MCF 10A (cell line): ENCODE measurements at regions of chr12 and their contacts with region 1.

Region 1: GRCh38 chr12:54993161-54993835 is 8.7 kb upstream of the TESPA1 start:
- DNase-seq: peak; percentile 74
- H3K4me3 Mint-ChIP-seq: no peak overlapping the region
- H3K27ac Mint-ChIP-seq: no peak overlapping the region
- H3K4me1 Mint-ChIP-seq: peaks cover 5% of the 10 kb centered on the region
- H3K27me3 Mint-ChIP-seq: peaks cover 76% of the 10 kb centered on the region
- CTCF ChIP-seq: peak; percentile 78

Region 2: DNA sequence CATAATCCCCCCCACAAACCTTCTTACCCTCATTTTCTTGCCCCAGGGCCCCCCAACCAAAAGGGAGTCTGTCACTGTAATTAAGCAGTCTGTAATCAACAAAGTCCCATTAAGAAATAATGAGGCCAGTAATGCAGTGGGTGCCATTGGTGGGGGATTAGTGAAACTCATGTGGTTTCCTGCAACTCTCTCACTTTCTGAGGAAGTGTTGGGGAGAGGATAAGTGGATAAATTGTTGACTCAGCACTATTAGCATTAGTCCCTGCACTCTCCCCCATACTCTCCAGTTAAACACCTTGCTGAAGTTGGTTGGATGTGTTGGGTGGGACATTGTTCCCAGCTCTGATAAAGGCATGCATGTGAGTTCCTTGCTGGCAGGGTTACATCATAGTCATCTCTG is 1100.5 kb before region 1 on chr12:
- CTCF ChIA-PET with region 1: no interaction called
- POLR2A ChIA-PET with region 1: no interaction called
- intact Hi-C with region 1: no loop called
- DNase-seq: no peak
- H3K4me3 Mint-ChIP-seq: no peak overlapping the region
- H3K27ac Mint-ChIP-seq: no peak overlapping the region
- H3K4me1 Mint-ChIP-seq: no peaks in the 10 kb centered on the region
- H3K27me3 Mint-ChIP-seq: peaks cover 33% of the 10 kb centered on the region
- CTCF ChIP-seq: no peak

Region 3: GRCh38 chr12:54977155-54977554 is 16.1 kb before region 1 on chr12:
- CTCF ChIA-PET with region 1: interaction called, 38 read pairs
- POLR2A ChIA-PET with region 1: no interaction called
- intact Hi-C with region 1: no loop called
- DNase-seq: peak; percentile 3
- H3K4me3 Mint-ChIP-seq: no peak overlapping the region
- H3K27ac Mint-ChIP-seq: no peak overlapping the region
- H3K4me1 Mint-ChIP-seq: no peaks in the 10 kb centered on the region
- H3K27me3 Mint-ChIP-seq: peaks cover 62% of the 10 kb centered on the region
- CTCF ChIP-seq: no peak

Region 4: GRCh38 chr12:55019779-55020178 is 26.5 kb after region 1 on chr12 and contains the start of gene NEUROD4:
- CTCF ChIA-PET with region 1: interaction called, 23 read pairs
- POLR2A ChIA-PET with region 1: no interaction called
- intact Hi-C with region 1: no loop called
- DNase-seq: peak; percentile 54
- H3K4me3 Mint-ChIP-seq: no peak within 1 kb of the TSS
- H3K27ac Mint-ChIP-seq: no peak within 1 kb of the TSS
- H3K4me1 Mint-ChIP-seq: no peaks in the 10 kb centered on the region
- H3K27me3 Mint-ChIP-seq: peaks cover 64% of the 10 kb centered on the region
- CTCF ChIP-seq: no peak
- total RNA-seq, gene NEUROD4: not detected in 2 replicates

Region 5: DNA sequence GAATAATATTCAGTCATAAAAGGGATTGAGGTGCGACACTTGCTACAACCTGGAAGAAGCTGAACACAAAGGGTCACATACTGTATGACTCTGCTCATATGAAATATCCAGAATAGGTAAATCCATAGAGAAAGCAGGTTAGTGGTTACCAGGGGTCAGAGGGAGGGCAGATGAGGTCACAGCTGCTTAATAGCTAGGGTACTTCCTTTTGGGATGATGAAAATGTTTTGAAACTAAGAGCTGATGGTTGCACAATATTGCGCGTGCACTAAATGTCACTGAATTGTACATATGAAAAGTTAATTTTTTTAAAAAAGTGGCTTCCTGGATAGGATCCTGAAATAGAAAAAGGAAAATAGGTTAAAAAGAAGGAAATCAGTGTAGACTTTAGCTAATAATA is 50.2 kb after region 1 on chr12:
- CTCF ChIA-PET with region 1: interaction called, 11 read pairs
- POLR2A ChIA-PET with region 1: no interaction called
- intact Hi-C with region 1: no loop called
- DNase-seq: no peak
- H3K4me3 Mint-ChIP-seq: no peak overlapping the region
- H3K27ac Mint-ChIP-seq: no peak overlapping the region
- H3K4me1 Mint-ChIP-seq: no peaks in the 10 kb centered on the region
- H3K27me3 Mint-ChIP-seq: peaks cover 72% of the 10 kb centered on the region
- CTCF ChIP-seq: no peak

Region 6: DNA sequence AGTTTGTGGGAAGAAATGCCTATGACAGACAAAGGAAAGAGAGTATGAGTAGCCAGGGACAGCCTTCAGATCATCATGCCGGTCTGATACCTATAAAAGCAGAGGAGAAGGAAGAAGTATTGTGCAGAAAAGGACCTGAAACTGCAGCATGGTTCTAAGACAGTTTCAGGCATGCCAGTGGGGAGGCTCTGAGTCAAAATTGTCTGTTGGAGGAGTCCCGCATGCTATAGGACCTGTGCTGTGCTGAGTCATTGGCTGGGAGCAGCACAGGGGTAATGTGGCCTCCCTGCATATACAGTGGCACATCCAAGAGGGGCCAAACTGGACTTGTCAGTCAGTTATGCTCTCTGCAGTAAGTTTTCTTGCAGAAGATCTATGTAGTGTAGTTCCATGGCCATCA is 67.2 kb after region 1 on chr12:
- CTCF ChIA-PET with region 1: interaction called, 233 read pairs
- POLR2A ChIA-PET with region 1: no interaction called
- intact Hi-C with region 1: no loop called
- DNase-seq: peak; percentile 27
- H3K4me3 Mint-ChIP-seq: no peak overlapping the region
- H3K27ac Mint-ChIP-seq: no peak overlapping the region
- H3K4me1 Mint-ChIP-seq: no peaks in the 10 kb centered on the region
- H3K27me3 Mint-ChIP-seq: peaks cover 99% of the 10 kb centered on the region
- CTCF ChIP-seq: no peak

Region 7: DNA sequence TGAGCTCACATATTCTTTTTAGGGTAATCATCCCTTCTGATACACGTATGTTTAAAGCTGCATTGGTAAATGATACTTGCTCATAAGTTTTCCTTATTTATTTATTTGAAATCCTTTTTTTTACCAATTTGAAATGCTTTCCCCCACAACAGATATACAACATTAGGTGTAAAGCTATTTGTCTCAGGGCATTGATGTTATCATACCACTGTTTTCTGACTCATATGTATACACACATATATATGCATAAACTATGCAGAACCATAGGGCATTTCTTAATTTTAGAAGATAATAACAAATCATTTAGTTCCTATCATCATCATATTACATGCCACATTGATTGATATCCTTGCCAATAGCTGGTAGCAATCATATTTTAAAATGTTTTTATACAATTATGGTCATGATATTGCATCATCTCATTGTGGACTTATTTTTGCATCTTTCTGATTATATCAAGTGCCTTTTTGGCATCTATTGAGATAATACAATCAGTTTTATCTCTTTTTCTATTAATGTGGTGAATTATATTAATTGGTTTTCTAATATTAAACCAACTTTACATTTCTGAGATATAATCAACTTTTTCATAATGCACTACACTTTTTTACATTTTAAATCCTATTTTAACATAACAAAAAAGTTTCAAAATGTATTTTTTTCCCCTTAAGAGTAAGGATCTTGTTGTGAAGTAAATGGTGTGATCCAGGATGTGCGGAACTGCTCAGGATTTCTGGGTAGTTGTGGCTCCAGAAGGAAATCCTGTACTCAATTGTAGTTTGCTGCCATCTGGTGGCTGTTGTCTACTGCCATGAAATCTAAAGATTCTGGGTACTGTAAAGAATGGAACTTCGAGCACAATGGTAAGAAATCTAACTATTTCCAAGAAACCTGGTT is 149.6 kb after region 1 on chr12:
- CTCF ChIA-PET with region 1: interaction called, 33 read pairs
- POLR2A ChIA-PET with region 1: no interaction called
- intact Hi-C with region 1: loop called (anchors 1 kb)
- DNase-seq: peak; percentile 67
- H3K4me3 Mint-ChIP-seq: no peak overlapping the region
- H3K27ac Mint-ChIP-seq: no peak overlapping the region
- H3K4me1 Mint-ChIP-seq: no peaks in the 10 kb centered on the region
- H3K27me3 Mint-ChIP-seq: peaks cover 59% of the 10 kb centered on the region
- CTCF ChIP-seq: peak; percentile 57

Region 8: DNA sequence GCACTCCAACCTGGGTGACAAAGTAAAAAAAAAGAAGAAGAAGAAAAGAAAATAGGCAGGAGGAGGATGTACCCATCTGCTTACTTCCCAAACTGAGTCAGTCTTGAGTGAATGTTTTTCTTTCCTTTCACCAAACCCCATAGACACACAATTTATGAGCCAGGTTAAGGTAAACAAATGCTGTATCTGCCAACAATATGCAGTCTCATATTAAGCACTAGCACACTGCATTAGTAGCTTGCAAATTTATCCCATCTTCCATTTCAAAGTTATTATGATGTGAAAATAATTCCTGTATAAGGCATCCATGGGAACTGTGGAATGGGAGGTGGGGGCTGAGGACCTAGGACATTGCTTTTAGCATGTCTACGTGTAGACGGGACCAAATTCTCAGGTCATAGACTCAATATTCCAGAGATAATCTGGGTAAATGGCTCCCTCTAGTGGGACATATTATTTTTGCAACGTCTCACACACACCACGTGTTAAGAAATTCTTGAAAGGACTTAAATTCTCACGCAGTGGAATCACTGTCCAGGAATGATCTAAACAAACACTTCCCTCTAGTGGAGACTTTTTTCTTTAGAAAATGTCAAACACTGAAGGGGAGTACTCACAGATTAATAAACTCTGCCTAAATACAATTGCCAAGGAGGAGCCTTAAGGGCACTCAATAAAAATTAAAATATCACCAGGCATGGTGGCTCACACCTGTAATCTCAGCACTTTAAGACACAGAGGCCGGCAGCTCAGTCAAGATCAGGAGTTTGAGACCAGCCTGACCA is 626.2 kb after region 1 on chr12:
- CTCF ChIA-PET with region 1: interaction called, 3 read pairs
- POLR2A ChIA-PET with region 1: no interaction called
- intact Hi-C with region 1: loop called (anchors 5 kb)
- DNase-seq: peak; percentile 92
- H3K4me3 Mint-ChIP-seq: no peak overlapping the region
- H3K27ac Mint-ChIP-seq: no peak overlapping the region
- H3K4me1 Mint-ChIP-seq: no peaks in the 10 kb centered on the region
- H3K27me3 Mint-ChIP-seq: peaks cover 79% of the 10 kb centered on the region
- CTCF ChIP-seq: peak; percentile 69